Spleen (tissue), 13 donors: ENCODE measurements at regions of chr4 and their contacts with region 1.

Region 1: DNA sequence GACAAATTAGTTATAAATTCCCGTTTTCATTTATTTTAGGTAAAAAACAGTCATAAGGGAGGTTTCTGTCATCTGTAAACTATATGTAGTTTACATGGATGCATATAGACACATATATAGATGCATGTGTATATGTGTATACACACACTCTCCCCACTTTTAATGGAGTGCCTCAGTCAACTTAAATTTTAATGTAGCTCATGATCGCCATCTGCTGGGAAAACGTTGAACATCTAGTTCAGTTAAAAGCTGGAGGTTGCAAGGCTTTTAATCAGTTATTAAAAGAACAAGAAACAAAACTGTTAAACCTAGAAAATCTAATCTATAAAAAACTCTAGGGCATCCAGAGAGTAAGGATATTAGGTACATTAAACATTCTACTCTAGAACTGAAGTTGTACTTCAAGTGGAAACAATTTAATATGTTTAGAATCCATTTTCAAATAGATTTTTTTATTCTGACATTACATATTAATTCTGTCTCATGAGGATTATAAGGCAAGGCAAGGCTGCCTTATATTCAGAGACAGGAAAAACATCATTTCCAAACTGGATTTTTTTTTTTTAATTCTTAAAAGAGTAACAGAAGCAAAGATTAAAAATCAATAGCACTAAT is 122.6 kb downstream of the SHISA3 start:
- DNase-seq: no peak
- H3K4me3 ChIP-seq: no peak overlapping the region
- H3K27ac ChIP-seq: no peak overlapping the region
- H3K4me1 ChIP-seq: no peaks in the 10 kb centered on the region
- H3K27me3 ChIP-seq: no peaks in the 10 kb centered on the region
- CTCF ChIP-seq: peak in 10 of 11 experiments; percentile 34 to 75 (median 64)
- POLR2A ChIP-seq: no peak

Region 2: DNA sequence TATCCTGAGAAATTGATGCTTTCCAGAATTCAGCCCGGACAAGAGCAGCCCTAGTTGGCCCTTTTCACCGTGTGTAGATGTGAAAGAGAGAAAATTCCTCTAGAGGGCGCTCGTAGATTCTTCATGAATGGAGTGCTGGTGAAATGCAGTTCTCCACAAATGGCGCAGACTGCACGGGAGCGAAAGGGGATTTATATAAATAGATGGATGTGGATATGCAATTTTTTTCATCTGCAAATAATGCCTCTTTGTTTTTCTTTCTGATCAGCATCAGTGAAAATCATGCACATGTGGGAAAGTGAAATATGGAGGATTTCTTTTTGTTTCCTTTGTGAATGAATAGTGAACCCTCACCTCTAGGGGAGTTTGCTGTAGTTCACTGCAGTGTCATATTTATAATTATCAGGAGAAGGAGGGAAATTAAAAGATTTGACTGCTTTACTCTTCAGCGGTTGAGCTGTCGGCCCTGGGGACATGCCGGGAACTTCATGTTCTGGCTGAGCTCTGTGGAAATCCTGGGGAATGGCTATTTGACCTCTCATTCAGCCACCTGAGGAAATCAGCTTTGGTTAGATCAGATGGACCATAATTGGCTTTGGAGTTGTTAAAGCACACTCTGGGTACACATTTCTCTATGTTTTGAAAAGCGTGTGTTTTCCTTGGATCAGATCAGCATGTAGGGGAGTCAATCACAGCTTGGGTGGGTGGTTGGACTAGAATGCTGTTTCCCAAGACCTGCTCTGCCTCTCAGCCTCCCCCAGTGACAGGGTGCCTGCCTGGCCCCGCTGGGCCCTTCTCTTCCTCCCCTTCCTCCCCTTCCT is 237.6 kb before region 1 on chr4:
- intact Hi-C with region 1: loop called (anchors 5 kb)
- DNase-seq: no peak
- H3K4me3 ChIP-seq: peak overlapping the region in 1 of 8 donors; percentile 36
- H3K27ac ChIP-seq: no peak overlapping the region
- H3K4me1 ChIP-seq: peaks cover 0 to 12% (median 7%) of the 10 kb centered on the region in 6 donors
- H3K27me3 ChIP-seq: peaks cover 0 to 17% (median 0%) of the 10 kb centered on the region in 7 donors
- CTCF ChIP-seq: peak in 10 of 11 experiments; percentile 23 to 82 (median 66)
- POLR2A ChIP-seq: no peak

Region 3: DNA sequence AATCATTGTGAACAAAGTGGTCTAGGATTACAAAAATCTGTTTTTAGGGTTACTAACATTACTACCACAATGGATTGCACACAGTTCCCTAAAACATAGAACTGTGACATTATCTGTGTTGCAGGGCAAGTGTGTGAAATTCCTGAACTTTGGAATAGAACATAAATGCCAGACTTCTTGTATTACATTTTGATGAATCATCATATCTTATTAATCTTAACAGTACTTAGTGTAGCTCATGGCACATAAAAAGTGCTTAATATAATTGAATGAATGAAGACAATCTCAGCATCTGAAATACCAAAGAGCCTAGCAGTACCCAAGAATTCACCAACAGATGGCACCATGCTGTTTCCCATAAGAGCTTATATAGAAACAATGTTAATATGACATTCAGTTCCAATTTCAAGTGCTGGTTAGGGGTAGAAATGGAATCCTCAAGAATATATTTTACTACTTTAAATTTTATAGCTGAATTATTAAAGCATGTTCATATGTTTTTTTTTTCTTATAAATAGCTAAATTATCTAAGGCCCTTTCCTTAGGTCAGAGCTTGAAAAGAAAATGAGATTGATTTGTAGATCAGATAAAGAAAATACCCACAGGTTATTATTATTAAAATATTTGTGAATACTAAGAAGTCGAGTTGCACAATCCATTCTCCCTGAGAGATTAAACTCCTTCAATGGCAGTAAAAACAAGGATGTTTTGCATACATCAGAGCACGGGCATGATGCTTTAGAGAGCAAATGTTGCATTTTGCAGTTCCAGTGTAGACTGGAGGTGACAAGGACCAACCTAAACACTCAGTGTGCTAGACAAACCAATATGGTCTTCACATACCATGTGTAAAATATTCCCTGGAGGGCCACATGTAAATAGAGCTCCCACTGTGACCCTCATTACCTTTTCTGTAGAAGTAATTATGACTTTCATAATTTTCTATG is 148.3 kb before region 1 on chr4:
- intact Hi-C with region 1: loop called (anchors 10 kb)
- DNase-seq: no peak
- H3K4me3 ChIP-seq: no peak overlapping the region
- H3K27ac ChIP-seq: no peak overlapping the region
- H3K4me1 ChIP-seq: no peaks in the 10 kb centered on the region
- H3K27me3 ChIP-seq: no peaks in the 10 kb centered on the region
- CTCF ChIP-seq: peak in 7 of 11 experiments; percentile 31 to 61 (median 43)
- POLR2A ChIP-seq: no peak

Region 4: DNA sequence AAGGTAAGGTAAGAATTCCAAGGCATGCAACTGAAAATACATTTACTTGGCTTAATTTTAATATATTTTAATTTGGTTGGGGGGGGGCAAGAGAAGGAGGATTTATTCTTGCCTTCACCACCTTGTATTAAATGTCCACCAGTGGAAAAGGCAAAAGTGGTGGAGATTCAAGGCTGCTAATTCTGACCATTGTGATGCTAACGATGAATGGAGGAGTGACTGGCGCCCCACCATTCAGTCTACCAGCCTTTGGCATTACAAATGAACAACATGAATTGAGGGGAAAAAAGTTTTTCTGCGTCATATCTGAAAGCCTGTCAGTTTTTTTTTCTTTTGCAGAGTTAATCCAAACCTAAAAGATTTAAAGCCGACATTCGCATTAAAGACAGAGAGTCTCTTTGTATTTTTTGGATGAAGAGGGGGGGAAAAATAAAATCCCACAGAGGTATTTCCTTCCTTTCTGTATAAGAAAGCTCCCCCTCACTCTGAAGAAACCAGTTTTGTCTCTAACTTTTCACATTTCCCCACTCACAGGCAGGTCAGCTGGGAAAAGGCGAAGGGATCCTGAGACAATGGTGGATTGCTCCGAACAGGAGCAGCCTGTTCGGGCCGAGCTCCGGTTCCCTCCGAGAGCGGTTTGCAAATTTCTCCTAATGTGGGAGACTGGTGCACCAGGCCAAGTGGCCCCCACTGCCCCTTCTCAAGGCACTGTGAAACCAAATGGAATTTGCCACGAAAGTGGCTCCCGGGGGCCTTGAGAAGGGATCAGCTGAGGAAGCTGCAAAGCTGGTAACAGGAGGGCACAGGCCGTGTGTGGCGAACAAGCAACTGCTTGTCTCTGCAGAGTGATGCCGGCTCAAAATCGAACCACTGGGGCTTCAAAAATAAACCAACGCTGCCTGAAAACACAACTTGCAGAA is 94.5 kb before region 1 on chr4:
- intact Hi-C with region 1: no loop called
- DNase-seq: no peak
- H3K4me3 ChIP-seq: no peak overlapping the region
- H3K27ac ChIP-seq: no peak overlapping the region
- H3K4me1 ChIP-seq: no peaks in the 10 kb centered on the region
- H3K27me3 ChIP-seq: no peaks in the 10 kb centered on the region
- CTCF ChIP-seq: no peak
- POLR2A ChIP-seq: no peak